MCF 10A (cell line): ENCODE measurements at regions of chr3 and their contacts with region 1.

Region 1: DNA sequence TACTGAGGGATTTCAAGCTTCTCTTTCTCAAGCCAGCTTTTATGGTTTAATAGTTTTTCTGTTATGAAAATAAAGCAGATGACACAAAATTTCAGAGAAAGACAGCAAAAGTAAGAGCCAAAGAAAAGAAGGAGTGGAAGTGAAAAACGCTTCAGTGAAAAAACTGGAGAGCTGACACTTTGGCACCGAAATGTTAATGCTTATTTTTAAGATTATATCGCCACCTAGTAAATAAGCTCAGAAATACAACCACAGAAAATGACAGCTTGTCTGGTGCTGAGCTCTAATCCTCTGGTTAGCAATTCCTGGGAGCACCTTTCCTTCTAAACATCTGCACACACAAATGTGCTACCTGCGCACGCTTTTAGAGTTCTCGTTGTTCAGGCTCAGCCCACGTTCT is 101.6 kb downstream of the ZPLD1 start:
- DNase-seq: peak; percentile 55
- H3K4me3 Mint-ChIP-seq: no peak overlapping the region
- H3K27ac Mint-ChIP-seq: no peak overlapping the region
- H3K4me1 Mint-ChIP-seq: peaks cover 16% of the 10 kb centered on the region
- H3K27me3 Mint-ChIP-seq: no peaks in the 10 kb centered on the region
- CTCF ChIP-seq: peak; percentile 48

Region 2: GRCh38 chr3:101809178-101810021 is 727.1 kb before region 1 on chr3:
- CTCF ChIA-PET with region 1: interaction called, 8 read pairs
- POLR2A ChIA-PET with region 1: no interaction called
- intact Hi-C with region 1: loop called (anchors 5 kb)
- DNase-seq: peak; percentile 46
- H3K4me3 Mint-ChIP-seq: no peak overlapping the region
- H3K27ac Mint-ChIP-seq: no peak overlapping the region
- H3K4me1 Mint-ChIP-seq: peaks cover 10% of the 10 kb centered on the region
- H3K27me3 Mint-ChIP-seq: no peaks in the 10 kb centered on the region
- CTCF ChIP-seq: peak; percentile 64

Region 3: GRCh38 chr3:102235679-102236078 is 300.8 kb before region 1 on chr3:
- CTCF ChIA-PET with region 1: interaction called, 672 read pairs
- POLR2A ChIA-PET with region 1: interaction called, 6 read pairs
- intact Hi-C with region 1: loop called (anchors 1 kb)
- DNase-seq: peak; percentile 41
- H3K4me3 Mint-ChIP-seq: no peak overlapping the region
- H3K27ac Mint-ChIP-seq: no peak overlapping the region
- H3K4me1 Mint-ChIP-seq: no peaks in the 10 kb centered on the region
- H3K27me3 Mint-ChIP-seq: no peaks in the 10 kb centered on the region
- CTCF ChIP-seq: peak; percentile 66

Region 4: DNA sequence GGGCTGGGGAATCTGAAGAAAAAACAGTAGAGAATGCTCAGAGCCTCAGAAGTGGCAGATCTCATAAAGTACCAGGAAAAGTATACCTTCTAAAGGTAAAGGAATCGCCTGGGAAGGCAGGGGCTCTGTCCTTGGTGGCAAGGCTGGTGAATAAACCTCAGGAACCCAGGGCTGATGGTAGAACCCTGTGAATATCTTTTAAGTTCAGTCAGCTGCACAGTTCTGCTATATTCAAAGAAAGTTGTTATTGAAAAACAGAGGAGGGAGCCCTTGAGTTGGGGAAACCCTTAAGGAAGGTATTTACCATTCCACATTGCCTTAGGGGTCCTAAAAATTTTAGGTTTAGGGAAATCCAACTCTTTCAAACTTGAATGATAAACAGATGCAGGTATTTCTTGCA is 70.5 kb before region 1 on chr3:
- CTCF ChIA-PET with region 1: interaction called, 5 read pairs
- POLR2A ChIA-PET with region 1: no interaction called
- intact Hi-C with region 1: loop called (anchors 2 kb)
- DNase-seq: peak; percentile 20
- H3K4me3 Mint-ChIP-seq: no peak overlapping the region
- H3K27ac Mint-ChIP-seq: no peak overlapping the region
- H3K4me1 Mint-ChIP-seq: peaks cover 4% of the 10 kb centered on the region
- H3K27me3 Mint-ChIP-seq: no peaks in the 10 kb centered on the region
- CTCF ChIP-seq: peak; percentile 9

Region 5: DNA sequence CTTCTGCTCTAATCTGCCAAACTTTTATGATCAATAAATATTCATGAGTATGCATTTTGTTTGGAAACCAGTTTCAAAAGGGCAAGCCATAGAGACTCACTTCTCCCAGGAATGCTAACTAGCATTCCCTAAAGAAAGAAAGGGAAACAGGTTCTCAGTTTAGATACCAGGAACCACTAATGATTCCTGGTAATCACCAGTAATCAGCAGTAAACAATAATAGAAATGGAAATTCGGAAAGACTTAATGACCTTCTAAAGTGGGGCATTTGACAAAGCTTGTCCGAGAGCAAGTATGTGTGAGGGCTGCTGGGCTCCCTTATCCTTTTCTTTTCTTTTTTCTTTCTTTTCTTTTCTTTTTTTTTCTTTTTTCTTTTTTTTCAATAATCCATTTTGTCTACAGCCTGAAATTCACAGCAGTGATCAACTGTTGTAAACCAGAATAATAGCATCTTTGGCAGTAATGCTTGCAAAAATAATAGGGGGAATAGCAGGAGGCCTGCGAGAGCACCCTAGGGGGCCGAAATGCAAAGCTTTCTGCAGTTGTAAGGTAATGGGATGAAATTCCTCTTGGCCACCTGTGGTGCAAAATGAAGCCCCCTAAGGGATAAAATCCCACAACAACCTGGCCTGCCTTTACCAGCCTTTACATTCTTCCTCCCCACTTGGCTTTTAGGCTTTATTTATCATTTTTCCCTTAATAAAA is 151.5 kb after region 1 on chr3:
- CTCF ChIA-PET with region 1: no interaction called
- POLR2A ChIA-PET with region 1: no interaction called
- intact Hi-C with region 1: no loop called
- DNase-seq: no peak
- H3K4me3 Mint-ChIP-seq: no peak overlapping the region
- H3K27ac Mint-ChIP-seq: no peak overlapping the region
- H3K4me1 Mint-ChIP-seq: no peaks in the 10 kb centered on the region
- H3K27me3 Mint-ChIP-seq: peaks cover 85% of the 10 kb centered on the region
- CTCF ChIP-seq: no peak